Psoas muscle (tissue), 8 donors: ENCODE measurements at regions of chr9 and their contacts with region 1.

Region 1: GRCh38 chr9:17630531-17631337 is 51.9 kb downstream of the SH3GL2 start:
- DNase-seq: no peak
- ATAC-seq: no peak
- H3K4me3 ChIP-seq: no peak overlapping the region
- H3K27ac ChIP-seq: no peak overlapping the region
- H3K4me1 ChIP-seq: no peaks in the 10 kb centered on the region
- H3K27me3 ChIP-seq: no peaks in the 10 kb centered on the region
- CTCF ChIP-seq: no peak

Region 2: DNA sequence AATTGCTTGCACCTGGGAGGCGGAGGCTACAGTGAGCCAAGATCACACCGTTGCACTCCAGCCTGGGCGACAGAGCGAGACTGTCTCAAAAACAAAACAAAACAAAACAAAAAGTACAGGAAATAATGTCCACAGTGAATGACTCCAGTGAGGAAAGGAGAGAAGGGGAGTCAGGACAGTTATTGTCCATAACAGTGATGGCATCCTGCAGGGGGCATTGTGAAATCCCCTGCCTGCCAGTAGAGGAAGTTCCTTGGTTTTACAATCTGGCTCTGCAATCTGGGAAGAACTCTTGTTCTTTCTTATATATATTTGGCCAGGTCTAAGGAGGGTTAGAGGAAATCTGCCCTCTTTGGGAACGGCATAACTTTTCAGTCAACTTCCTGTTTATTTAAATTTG is 43.6 kb before region 1 on chr9:
- intact Hi-C with region 1: loop called in 1 of 2 experiments (anchors 10 kb)
- DNase-seq: no peak
- ATAC-seq: no peak
- H3K4me3 ChIP-seq: no peak overlapping the region
- H3K27ac ChIP-seq: no peak overlapping the region
- H3K4me1 ChIP-seq: no peaks in the 10 kb centered on the region
- H3K27me3 ChIP-seq: peaks cover 0 to 3% (median 2%) of the 10 kb centered on the region in 3 donors
- CTCF ChIP-seq: no peak

Region 3: DNA sequence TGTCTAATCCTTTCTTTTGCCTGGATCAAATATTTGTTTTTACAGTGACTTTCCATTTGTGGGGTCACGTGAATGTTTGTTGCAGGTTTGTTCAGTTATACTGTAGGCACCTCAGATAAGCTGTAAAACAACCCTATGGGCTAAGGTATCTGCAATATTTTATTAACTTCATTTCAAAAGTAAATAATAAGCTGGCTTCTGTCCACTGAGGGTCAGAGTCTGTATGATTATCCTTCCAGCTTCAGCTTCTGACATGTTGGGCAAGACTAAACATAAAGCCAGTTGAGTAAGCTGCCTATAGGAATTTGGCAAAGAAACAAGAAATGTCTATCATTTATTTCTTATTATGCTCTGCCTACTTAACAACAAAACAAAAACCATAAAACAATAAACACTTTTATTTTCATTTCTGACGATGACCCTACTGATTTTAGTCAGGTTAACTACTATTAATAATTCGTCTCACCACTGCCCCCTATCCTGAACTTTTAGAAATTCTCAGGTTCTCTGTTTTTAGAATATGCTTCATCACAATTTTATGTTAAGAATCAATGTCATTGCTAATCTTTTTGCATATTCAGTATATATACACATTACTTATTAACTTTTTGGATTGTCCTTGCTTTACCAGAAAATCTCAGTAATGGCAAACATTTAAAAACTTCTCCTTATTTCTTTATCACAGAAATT is 429.7 kb after region 1 on chr9:
- intact Hi-C with region 1: no loop called
- DNase-seq: no peak
- ATAC-seq: no peak
- H3K4me3 ChIP-seq: no peak overlapping the region
- H3K27ac ChIP-seq: no peak overlapping the region
- H3K4me1 ChIP-seq: no peaks in the 10 kb centered on the region
- H3K27me3 ChIP-seq: no peaks in the 10 kb centered on the region
- CTCF ChIP-seq: no peak